GM13977 (cell line): ENCODE measurements at regions of chr2 and their contacts with region 1.

Region 1: DNA sequence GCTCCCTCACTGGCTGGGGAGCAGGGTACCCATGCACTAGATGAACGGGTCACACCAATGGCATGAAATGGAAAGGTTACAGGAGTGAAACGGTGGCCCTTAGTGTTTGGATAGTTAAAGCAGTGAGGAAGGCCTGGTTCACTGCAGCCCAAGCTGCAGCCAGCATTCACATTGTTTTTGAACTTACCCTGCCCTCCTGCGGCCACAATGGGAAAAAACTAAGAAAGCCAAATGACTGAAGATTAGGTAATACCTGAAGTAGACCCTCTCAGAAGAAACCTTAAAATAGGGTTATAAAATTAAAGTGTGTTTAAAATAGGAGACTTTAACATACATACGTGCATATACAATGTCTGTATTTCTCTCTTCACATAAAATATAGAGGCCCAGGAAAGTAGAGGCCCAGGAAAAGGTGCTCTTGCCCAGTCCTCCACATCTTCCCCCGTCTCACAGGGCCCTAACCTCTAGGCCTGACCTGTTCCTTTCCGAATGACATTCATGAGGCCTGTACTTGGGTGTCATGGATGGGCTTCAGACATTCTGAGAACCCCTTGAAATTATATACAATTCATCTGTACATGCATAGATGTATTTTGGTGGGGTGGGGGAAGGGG is 33.3 kb downstream of the DOK1 start:
- DNase-seq: peak; percentile 72
- CTCF ChIP-seq: peak; percentile 80

Region 2: GRCh38 chr2:74482801-74483674 is 104.7 kb before region 1 on chr2 and contains the starts of genes CCDC142 and TTC31:
- in situ Hi-C with region 1: loop called (anchors 25 kb)
- DNase-seq: peak; percentile 93
- CTCF ChIP-seq: peak; percentile 95

Region 3: GRCh38 chr2:74915743-74916142 is 328.0 kb after region 1 on chr2:
- in situ Hi-C with region 1: no loop called
- DNase-seq: no peak
- CTCF ChIP-seq: no peak